Activated CD8-positive, alpha-beta T cell treated with anti-CD3 and anti-CD28 coated beads for 36 hours (primary cell): ENCODE measurements at regions of chr11 and their contacts with region 1.

Region 1: GRCh38 chr11:128290106-128290840 is 297.1 kb downstream of the ETS1 start:
- DNase-seq: peak; percentile 87
- ATAC-seq: peak; percentile 62
- H3K4me3 Mint-ChIP-seq: peak overlapping the region; percentile 83
- H3K27ac Mint-ChIP-seq: peak overlapping the region; percentile 95
- H3K4me1 Mint-ChIP-seq: peaks cover 94% of the 10 kb centered on the region
- H3K27me3 Mint-ChIP-seq: no peaks in the 10 kb centered on the region
- CTCF ChIP-seq: peak; percentile 88

Region 2: GRCh38 chr11:128039140-128040021 is 250.9 kb before region 1 on chr11:
- CTCF ChIA-PET with region 1: no interaction called
- POLR2A ChIA-PET with region 1: interaction called, 3 read pairs
- intact Hi-C with region 1: loop called (anchors 5 kb)
- DNase-seq: peak; percentile 91
- ATAC-seq: peak; percentile 90
- H3K4me3 Mint-ChIP-seq: peak overlapping the region; percentile 58
- H3K27ac Mint-ChIP-seq: peak overlapping the region; percentile 93
- H3K4me1 Mint-ChIP-seq: peaks cover 42% of the 10 kb centered on the region
- H3K27me3 Mint-ChIP-seq: no peaks in the 10 kb centered on the region
- CTCF ChIP-seq: peak; percentile 45

Region 3: GRCh38 chr11:128116885-128117284 is 173.4 kb before region 1 on chr11:
- CTCF ChIA-PET with region 1: no interaction called
- POLR2A ChIA-PET with region 1: no interaction called
- intact Hi-C with region 1: no loop called
- DNase-seq: no peak
- ATAC-seq: no peak
- H3K4me3 Mint-ChIP-seq: no peak overlapping the region
- H3K27ac Mint-ChIP-seq: no peak overlapping the region
- H3K4me1 Mint-ChIP-seq: no peaks in the 10 kb centered on the region
- H3K27me3 Mint-ChIP-seq: no peaks in the 10 kb centered on the region
- CTCF ChIP-seq: no peak

Region 4: DNA sequence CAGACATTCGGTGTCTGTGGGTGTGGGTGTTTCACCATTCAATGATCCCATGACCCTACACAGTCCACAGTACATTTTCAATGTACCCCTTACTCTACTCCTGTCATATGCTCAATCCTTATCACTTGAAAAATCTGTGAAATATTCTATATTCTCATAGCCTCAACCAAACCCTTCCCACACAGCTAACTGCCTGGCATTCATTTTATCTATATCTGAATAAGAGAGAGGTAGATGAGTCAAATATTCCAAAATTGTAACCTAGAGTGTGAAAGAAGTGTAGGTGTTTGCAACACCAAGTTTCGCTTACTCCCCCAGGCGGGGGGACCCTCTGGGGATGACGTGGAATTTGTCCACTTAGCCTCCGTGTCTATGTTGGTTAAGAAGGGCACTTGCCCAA is 57.7 kb before region 1 on chr11:
- CTCF ChIA-PET with region 1: interaction called, 7 read pairs
- POLR2A ChIA-PET with region 1: interaction called, 3 read pairs
- intact Hi-C with region 1: loop called (anchors 2 kb)
- DNase-seq: peak; percentile 84
- ATAC-seq: peak; percentile 81
- H3K4me3 Mint-ChIP-seq: no peak overlapping the region
- H3K27ac Mint-ChIP-seq: peak overlapping the region; percentile 79
- H3K4me1 Mint-ChIP-seq: peaks cover 58% of the 10 kb centered on the region
- H3K27me3 Mint-ChIP-seq: no peaks in the 10 kb centered on the region
- CTCF ChIP-seq: no peak

Region 5: GRCh38 chr11:128269466-128269865 is 20.8 kb before region 1 on chr11:
- CTCF ChIA-PET with region 1: no interaction called
- POLR2A ChIA-PET with region 1: no interaction called
- intact Hi-C with region 1: no loop called
- DNase-seq: no peak
- ATAC-seq: no peak
- H3K4me3 Mint-ChIP-seq: no peak overlapping the region
- H3K27ac Mint-ChIP-seq: no peak overlapping the region
- H3K4me1 Mint-ChIP-seq: peaks cover 26% of the 10 kb centered on the region
- H3K27me3 Mint-ChIP-seq: peaks cover 2% of the 10 kb centered on the region
- CTCF ChIP-seq: no peak

Region 6: GRCh38 chr11:128323381-128323780 is 33.1 kb after region 1 on chr11:
- CTCF ChIA-PET with region 1: interaction called, 58 read pairs
- POLR2A ChIA-PET with region 1: interaction called, 57 read pairs
- intact Hi-C with region 1: loop called (anchors 2 kb)
- DNase-seq: peak; percentile 61
- ATAC-seq: no peak
- H3K4me3 Mint-ChIP-seq: peak overlapping the region; percentile 70
- H3K27ac Mint-ChIP-seq: peak overlapping the region; percentile 98
- H3K4me1 Mint-ChIP-seq: peaks cover 85% of the 10 kb centered on the region
- H3K27me3 Mint-ChIP-seq: no peaks in the 10 kb centered on the region
- CTCF ChIP-seq: peak; percentile 70

Region 7: DNA sequence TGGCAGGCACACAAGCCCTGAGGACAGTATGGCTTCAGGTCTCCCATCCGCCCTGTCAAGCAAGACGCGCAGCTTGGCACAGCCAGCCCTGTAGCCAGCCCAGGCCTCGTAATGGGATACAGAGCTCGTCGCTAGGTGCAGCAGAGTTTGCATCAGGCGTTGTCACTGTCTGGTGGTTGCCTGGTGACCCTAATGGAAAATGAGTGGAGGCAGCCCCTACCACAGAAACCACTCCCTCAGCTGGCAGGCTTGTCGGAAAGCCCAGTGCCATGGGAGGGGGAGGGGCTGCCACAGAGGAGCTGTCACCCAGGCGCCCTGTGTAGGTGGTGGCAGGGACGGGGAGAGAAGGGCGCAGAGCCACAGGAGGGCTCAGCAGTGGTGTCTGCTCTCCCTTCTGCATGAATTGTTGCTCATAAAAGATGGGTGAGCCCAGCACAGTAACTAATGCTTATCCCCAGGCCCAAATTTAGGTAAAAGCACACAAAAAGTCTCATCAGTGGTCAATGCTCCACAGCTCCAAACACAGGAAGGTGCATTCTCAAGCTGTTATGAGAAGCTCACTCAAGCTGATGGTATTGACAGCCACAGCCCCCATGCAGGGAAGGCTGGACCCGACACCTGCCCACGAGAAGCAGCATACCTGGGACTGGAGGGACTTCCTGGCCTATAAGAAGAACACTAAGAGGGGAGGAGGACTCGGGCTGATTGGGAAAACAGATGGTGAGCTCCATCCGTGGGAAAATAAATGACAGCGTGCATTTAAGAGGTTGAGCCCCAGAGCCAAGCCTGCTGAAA is 132.5 kb after region 1 on chr11:
- CTCF ChIA-PET with region 1: interaction called, 24 read pairs
- POLR2A ChIA-PET with region 1: interaction called, 5 read pairs
- intact Hi-C with region 1: loop called (anchors 2 kb)
- DNase-seq: peak; percentile 99
- ATAC-seq: peak; percentile 93
- H3K4me3 Mint-ChIP-seq: peak overlapping the region; percentile 59
- H3K27ac Mint-ChIP-seq: peak overlapping the region; percentile 95
- H3K4me1 Mint-ChIP-seq: peaks cover 63% of the 10 kb centered on the region
- H3K27me3 Mint-ChIP-seq: no peaks in the 10 kb centered on the region
- CTCF ChIP-seq: no peak

Region 8: GRCh38 chr11:128472128-128473089 is 182.1 kb after region 1 on chr11:
- CTCF ChIA-PET with region 1: interaction called, 19 read pairs
- POLR2A ChIA-PET with region 1: interaction called, 32 read pairs
- intact Hi-C with region 1: loop called (anchors 5 kb)
- DNase-seq: peak; percentile 84
- ATAC-seq: peak; percentile 63
- H3K4me3 Mint-ChIP-seq: peak overlapping the region; percentile 77
- H3K27ac Mint-ChIP-seq: peak overlapping the region; percentile 97
- H3K4me1 Mint-ChIP-seq: peaks cover 92% of the 10 kb centered on the region
- H3K27me3 Mint-ChIP-seq: no peaks in the 10 kb centered on the region
- CTCF ChIP-seq: no peak

Region 9: DNA sequence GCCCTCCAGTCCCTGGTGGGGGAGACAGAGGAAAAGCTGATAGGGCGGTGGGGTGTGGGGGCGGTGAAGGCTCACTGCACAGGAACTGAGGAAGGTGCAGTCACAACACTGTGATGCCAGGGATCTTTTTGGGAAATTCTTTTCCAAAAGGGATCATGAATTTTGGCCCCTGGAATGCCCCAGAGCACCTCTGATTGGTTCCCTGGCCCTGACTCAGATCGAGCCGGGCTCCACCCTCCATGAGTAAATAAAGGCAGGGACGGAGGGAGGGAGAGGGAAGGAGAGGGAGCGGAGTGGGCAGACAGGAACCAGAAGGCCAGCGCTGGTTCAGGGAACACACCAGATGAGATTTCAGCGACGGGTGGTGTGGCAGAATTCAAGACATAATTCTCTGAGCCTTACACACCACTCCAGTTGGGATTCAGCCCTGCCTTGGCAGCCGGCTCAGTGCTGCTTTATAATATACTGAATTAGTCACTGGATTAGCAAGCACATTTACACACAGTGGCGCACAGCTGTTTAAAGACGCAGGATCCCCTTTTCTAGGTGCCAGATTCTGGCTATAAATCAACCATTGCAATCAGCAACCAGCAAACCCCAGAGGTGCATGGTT is 216.8 kb after region 1 on chr11:
- CTCF ChIA-PET with region 1: interaction called, 17 read pairs
- POLR2A ChIA-PET with region 1: interaction called, 39 read pairs
- intact Hi-C with region 1: loop called (anchors 10 kb)
- DNase-seq: peak; percentile 77
- ATAC-seq: peak; percentile 32
- H3K4me3 Mint-ChIP-seq: peak overlapping the region; percentile 95
- H3K27ac Mint-ChIP-seq: peak overlapping the region; percentile 96
- H3K4me1 Mint-ChIP-seq: peaks cover 86% of the 10 kb centered on the region
- H3K27me3 Mint-ChIP-seq: no peaks in the 10 kb centered on the region
- CTCF ChIP-seq: no peak